Heart right ventricle (tissue), 16 donors: ENCODE measurements at regions of chr2 and their contacts with region 1.

Region 1: GRCh38 chr2:105521205-105521604 is 122.4 kb upstream of the FHL2 start:
- DNase-seq: no peak
- ATAC-seq: no peak
- H3K4me3 ChIP-seq: no peak overlapping the region
- H3K27ac ChIP-seq: peak overlapping the region in 8 of 10 donors; percentile 3 to 67 (median 32)
- H3K4me1 ChIP-seq: peaks cover 3 to 48% (median 33%) of the 10 kb centered on the region in 9 donors
- H3K27me3 ChIP-seq: no peaks in the 10 kb centered on the region
- CTCF ChIP-seq: peak; percentile 33 to 78 (median 63)

Region 2: DNA sequence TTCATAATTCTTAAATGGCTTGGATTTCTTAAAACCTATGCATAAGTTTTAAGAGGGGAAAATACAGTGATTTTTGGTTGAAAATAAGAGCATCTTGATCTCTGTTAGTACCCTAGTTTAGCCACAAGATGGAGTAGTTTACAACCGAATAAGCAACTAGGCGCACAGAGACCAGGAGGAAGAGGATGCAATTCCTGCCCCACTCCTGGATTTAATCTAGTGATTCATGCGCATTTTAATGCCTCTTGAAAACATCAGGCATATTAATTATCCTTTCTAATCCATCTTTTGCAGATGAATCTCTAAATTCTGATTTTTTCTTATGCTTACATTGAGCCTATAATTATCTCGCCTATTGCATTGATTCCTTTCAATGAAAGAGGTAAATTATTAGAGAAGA is 406.7 kb before region 1 on chr2:
- intact Hi-C with region 1: loop called in 2 of 10 experiments (anchors 10 kb)
- DNase-seq: no peak
- ATAC-seq: peak in 2 of 8 donors; percentile 56 to 59
- H3K4me3 ChIP-seq: no peak overlapping the region
- H3K27ac ChIP-seq: no peak overlapping the region
- H3K4me1 ChIP-seq: peaks cover 0 to 4% (median 0%) of the 10 kb centered on the region in 9 donors
- H3K27me3 ChIP-seq: peaks cover 0 to 7% (median 0%) of the 10 kb centered on the region in 7 donors
- CTCF ChIP-seq: peak; percentile 57 to 80 (median 74)

Region 3: DNA sequence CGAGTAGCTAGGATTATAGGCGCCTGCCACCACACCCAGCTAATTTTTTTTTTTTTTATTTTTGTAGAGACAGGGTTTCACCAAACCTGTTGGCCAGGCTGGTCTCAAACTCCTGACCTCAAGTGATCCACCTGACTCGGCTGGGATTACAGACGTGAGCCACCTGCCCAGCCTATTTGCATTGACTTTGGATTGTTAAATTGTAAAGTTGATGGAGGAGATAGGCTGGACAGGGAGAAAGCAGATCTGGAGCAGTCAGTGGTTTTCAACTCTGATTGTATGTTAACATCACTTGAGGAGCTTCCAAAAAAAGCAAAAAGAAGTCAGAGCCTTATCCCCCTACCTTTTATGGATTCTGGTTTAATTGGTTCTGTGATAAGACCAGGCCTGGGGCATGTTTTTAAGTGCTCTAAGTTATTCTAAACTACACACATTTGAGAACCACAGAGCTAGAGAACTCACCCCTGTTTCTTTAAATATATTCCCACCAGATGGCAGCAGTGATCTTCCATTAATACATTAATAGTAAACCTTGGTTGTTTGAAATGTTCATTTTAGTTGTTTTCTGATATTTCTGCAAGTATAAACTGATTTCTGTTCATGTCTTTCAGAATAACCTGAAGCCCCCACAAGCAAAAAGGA is 176.4 kb before region 1 on chr2:
- intact Hi-C with region 1: loop called in 5 of 10 experiments (anchors 1 to 5 kb)
- DNase-seq: no peak
- ATAC-seq: peak in 5 of 8 donors; percentile 6 to 53 (median 47)
- H3K4me3 ChIP-seq: no peak overlapping the region
- H3K27ac ChIP-seq: no peak overlapping the region
- H3K4me1 ChIP-seq: peaks cover 0 to 3% (median 0%) of the 10 kb centered on the region in 9 donors
- H3K27me3 ChIP-seq: no peaks in the 10 kb centered on the region
- CTCF ChIP-seq: peak in 7 of 9 donors; percentile 35 to 61 (median 51)

Region 4: DNA sequence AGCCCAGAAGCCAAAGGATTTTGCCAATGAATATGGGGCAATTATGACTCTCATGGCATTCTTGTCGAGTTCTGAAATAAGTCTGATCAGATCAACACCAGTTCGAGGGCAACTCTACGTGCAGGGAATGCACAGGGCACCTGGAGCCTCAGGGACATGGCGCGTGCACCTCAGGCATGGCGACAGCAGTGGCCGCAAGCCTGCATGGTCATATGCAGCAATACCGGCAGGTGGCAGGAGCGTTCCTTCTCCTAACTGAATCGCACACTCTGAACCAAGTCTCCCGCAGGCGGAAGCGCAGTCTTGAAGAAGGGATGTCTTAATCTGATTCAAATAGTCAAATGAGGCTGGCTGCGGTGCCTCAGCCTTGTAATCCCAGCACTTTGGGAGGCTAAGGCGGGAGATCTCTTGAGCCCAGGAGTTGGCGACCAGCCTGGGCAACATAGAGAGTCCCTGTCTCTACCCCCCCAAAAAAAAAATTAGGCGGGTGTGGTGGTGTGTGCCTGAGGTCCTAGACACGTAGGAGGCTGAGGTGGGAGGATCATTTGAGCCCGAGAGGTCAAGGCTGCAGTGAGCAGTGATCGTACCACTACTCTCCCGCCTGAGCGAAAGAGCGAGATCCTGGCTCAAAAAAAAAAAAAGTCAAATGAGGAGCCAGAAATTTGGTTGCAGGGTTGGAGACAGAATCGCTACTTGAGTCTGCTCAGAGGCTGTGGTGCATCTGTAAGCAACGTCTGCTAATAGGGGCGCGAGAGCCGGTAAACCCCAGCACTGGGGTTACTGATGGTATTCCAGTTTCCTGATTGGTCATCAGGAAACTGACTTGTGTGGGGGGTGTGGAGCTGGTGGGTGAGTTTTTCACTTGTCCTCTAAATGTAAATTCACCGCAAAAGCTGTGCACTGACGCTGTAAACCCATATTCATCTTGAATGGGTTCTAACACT is 151.2 kb before region 1 on chr2:
- intact Hi-C with region 1: loop called (anchors 1 to 5 kb)
- DNase-seq: peak; percentile 81 to 84
- ATAC-seq: peak; percentile 7 to 60 (median 53)
- H3K4me3 ChIP-seq: no peak overlapping the region
- H3K27ac ChIP-seq: peak overlapping the region in 7 of 10 donors; percentile 7 to 93 (median 78)
- H3K4me1 ChIP-seq: peaks cover 3 to 88% (median 41%) of the 10 kb centered on the region in 9 donors
- H3K27me3 ChIP-seq: no peaks in the 10 kb centered on the region
- CTCF ChIP-seq: peak; percentile 64 to 91 (median 85)

Region 5: GRCh38 chr2:105431367-105432043 is 89.7 kb before region 1 on chr2:
- intact Hi-C with region 1: loop called in 4 of 10 experiments (anchors 5 kb)
- DNase-seq: peak; percentile 71 to 83
- ATAC-seq: peak; percentile 5 to 76 (median 66)
- H3K4me3 ChIP-seq: peak overlapping the region in 4 of 10 donors; percentile 41 to 62 (median 51)
- H3K27ac ChIP-seq: peak overlapping the region; percentile 54 to 96 (median 90)
- H3K4me1 ChIP-seq: peaks cover 0 to 66% (median 24%) of the 10 kb centered on the region in 9 donors
- H3K27me3 ChIP-seq: no peaks in the 10 kb centered on the region
- CTCF ChIP-seq: no peak

Region 6: GRCh38 chr2:105438104-105438929 is 82.9 kb before region 1 on chr2:
- intact Hi-C with region 1: loop called in 5 of 10 experiments (anchors 2 to 5 kb)
- DNase-seq: peak; percentile 72 to 83
- ATAC-seq: peak; percentile 81 to 91 (median 89)
- H3K4me3 ChIP-seq: peak overlapping the region; percentile 15 to 62 (median 50)
- H3K27ac ChIP-seq: peak overlapping the region; percentile 82 to 96 (median 90)
- H3K4me1 ChIP-seq: peaks cover 3 to 18% (median 13%) of the 10 kb centered on the region in 9 donors
- H3K27me3 ChIP-seq: no peaks in the 10 kb centered on the region
- CTCF ChIP-seq: no peak

Region 7: DNA sequence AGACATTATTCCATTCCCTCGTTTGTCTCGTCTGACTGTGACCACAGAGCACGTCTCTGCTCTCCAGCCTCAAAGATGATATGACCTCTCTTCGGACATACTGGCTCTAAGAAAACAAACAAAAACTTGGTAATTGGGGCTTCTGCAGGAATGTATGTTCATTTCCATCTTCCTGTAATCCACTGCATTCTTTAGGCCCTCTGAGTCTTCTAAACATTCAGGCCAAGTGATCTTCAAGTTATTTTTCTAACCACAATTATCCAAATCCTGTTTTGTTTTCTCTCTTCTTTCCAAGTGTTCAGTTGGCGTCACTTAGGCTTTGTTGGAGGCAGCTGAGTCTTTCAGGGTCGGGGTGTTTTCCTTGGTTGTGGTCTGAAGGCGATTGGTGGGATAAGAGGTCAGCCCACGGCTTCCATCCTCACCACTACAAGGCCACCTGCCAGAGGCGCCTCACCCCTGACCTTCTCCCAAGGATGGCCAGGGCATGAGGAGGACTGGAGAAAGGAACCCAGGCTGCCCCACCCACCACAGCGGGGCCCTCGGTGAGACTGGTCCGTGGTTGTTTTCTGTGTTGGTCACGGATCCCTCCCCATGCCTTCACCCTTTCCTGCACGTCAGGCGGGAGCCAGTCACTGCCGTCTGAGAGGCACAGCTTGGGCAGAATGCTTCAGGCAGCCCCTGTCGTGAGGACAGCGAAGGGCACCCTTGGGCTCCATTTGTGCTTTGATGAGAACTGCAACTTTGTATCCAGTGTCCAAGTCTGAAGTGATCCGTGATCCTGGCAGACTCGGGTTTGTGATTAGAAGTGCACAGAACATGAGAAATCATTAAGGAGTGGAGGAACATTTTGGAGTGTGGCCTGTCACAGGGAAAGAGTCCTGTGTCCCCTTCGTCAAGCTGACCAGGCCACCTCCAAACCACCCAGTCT is 33.8 kb before region 1 on chr2:
- intact Hi-C with region 1: loop called in 2 of 10 experiments (anchors 2 kb)
- DNase-seq: peak; percentile 37 to 57
- ATAC-seq: peak; percentile 40 to 85 (median 58)
- H3K4me3 ChIP-seq: no peak overlapping the region
- H3K27ac ChIP-seq: peak overlapping the region; percentile 76 to 96 (median 87)
- H3K4me1 ChIP-seq: peaks cover 0 to 42% (median 24%) of the 10 kb centered on the region in 9 donors
- H3K27me3 ChIP-seq: no peaks in the 10 kb centered on the region
- CTCF ChIP-seq: no peak